Left lung (tissue), 14 donors: ENCODE measurements at regions of chr2 and their contacts with region 1.

Region 1: GRCh38 chr2:127884436-127885345 is 1.1 kb downstream of the AMMECR1L start:
- DNase-seq: peak in 1 of 4 donors; percentile 7
- ATAC-seq: no peak
- H3K4me3 ChIP-seq: peak overlapping the region; percentile 43 to 60
- H3K27ac ChIP-seq: peak overlapping the region; percentile 53 to 90
- H3K4me1 ChIP-seq: peaks cover 17 to 47% of the 10 kb centered on the region in 2 donors
- H3K27me3 ChIP-seq: no peaks in the 10 kb centered on the region
- CTCF ChIP-seq: no peak

Region 2: DNA sequence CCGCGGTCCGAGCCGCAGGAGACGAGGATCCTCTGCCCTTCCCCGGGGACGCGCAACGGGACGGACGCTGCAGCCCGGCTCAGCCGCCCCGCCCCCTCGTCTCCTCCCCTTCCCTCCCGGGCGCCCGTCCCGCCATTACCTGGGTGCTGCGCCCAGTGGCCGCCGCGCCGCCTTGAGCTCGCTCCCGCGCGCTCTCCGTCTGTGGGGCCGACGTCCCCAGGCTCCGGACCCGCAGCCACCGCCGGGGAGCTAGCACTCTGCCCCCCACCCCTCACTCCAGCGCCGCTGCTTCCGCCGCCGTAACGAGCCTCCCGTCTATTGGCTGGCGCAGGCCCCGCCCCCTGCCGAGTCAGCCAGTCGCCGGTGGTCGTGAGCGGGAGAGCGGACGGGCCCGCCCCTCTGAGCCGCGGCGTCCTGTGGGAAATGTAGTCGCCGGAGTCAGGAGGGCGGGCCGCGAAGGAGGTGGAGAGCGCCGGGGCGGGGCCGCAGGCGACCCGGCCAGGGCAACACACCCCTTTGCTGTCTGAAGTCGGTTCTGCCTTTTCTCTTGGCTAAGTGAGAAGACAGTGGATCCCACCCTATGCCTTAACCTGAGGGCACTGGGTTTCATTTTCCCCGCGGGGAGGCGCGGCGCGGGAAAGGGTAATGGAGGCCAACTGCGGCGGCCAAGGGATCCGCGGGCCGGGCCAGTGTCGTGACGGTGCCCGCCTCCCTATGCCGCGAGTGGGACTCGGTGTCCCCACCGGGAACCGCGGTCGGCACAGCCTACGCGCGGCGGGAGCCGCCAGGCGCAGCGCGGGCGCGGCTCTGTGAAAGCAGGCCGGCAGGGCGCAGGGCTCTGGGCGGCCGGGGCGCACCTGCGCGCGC is 143.3 kb after region 1 on chr2 and contains the start of gene SAP130:
- intact Hi-C with region 1: loop called in 1 of 2 experiments (anchors 10 kb)
- DNase-seq: peak; percentile 89 to 99 (median 98)
- ATAC-seq: peak; percentile 95
- H3K4me3 ChIP-seq: peak within 1 kb of the TSS; percentile 95 to 100
- H3K27ac ChIP-seq: peak within 1 kb of the TSS; percentile 92 to 95
- H3K4me1 ChIP-seq: peaks cover 5 to 28% of the 10 kb centered on the region in 2 donors
- H3K27me3 ChIP-seq: no peaks in the 10 kb centered on the region
- CTCF ChIP-seq: no peak
- polyA plus RNA-seq, gene SAP130: 23.3 to 27.7 (median 24.9) TPM

Region 3: GRCh38 chr2:128103407-128103806 is 218.7 kb after region 1 on chr2:
- intact Hi-C with region 1: no loop called
- DNase-seq: no peak
- ATAC-seq: no peak
- H3K4me3 ChIP-seq: no peak overlapping the region
- H3K27ac ChIP-seq: no peak overlapping the region
- H3K4me1 ChIP-seq: peaks cover 0 to 5% of the 10 kb centered on the region in 2 donors
- H3K27me3 ChIP-seq: no peaks in the 10 kb centered on the region
- CTCF ChIP-seq: no peak